ENCODE measurements at regions of chr10 and their contacts with region 1.

Region 1: GRCh38 chr10:97318772-97319651 is at the start of gene FRAT1:
- DNase-seq: peak; percentile 68 to 82
- H3K4me3 ChIP-seq: peak within 1 kb of the TSS; percentile 71
- H3K27ac ChIP-seq: peak within 1 kb of the TSS; percentile 88
- H3K4me1 ChIP-seq: no peaks in the 10 kb centered on the region
- H3K27me3 ChIP-seq: no peaks in the 10 kb centered on the region
- CTCF ChIP-seq: no peak
- total RNA-seq, gene FRAT1: 2.4 and 2.7 TPM in 2 replicates

Region 2: DNA sequence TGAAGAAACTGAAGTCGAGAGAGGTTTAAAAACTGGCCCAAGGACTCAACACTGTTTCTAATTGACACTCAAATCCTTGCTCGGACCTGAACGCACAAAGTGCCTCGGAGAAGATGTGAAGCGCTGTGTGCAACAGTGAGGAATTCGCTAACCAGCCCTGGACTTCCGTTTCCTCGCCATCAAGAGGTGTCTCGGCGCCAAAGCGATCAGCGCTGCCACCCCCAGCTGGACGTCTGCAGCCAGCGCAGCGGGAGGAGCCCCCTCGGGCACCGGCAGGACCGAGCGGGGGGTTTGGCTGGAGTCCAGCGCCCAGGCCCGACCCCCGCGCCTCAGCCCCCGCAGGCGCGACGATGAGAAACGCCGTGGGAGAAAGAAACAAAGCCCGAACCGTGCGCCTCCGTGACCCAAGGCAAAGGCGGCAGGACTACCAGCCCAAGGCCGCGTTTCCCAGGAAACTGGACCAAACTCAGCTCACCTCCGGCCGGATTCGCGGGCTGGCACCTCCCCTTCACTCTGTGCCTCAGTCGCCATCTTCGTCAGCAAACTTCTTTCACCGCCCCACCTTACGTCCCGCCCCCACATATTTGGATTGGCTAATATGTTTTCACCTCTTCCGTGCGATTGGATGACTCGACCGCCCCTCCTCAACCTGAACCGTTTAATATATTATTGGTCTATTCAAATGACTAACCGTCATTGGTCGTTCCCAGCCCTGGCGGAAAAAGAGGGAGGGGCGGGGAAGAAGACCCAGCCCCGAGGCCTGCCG is 26.7 kb before region 1 on chr10 and contains the start of gene ARHGAP19:
- CTCF ChIA-PET with region 1: no interaction called
- POLR2A ChIA-PET with region 1: no interaction called
- intact Hi-C with region 1: loop called (anchors 1 kb)
- DNase-seq: peak; percentile 89 to 93
- H3K4me3 ChIP-seq: peak within 1 kb of the TSS; percentile 61
- H3K27ac ChIP-seq: peak within 1 kb of the TSS; percentile 54
- H3K4me1 ChIP-seq: no peaks in the 10 kb centered on the region; the same call in 1 of the 2 replicates
- H3K27me3 ChIP-seq: no peaks in the 10 kb centered on the region
- CTCF ChIP-seq: no peak; the same call in 1 of the 2 replicates
- total RNA-seq, gene ARHGAP19: 11.2 and 11.5 TPM in 2 replicates

Measured in PC-9 (cell line).